ENCODE measurements at regions of chr15 and their contacts with region 1.

Region 1: GRCh38 chr15:42650208-42651066 is 75.0 kb downstream of the STARD9 start:
- DNase-seq: peak; percentile 87
- H3K4me3 ChIP-seq: no peak overlapping the region
- H3K27ac ChIP-seq: no peak overlapping the region
- H3K4me1 ChIP-seq: peaks cover 3% of the 10 kb centered on the region
- H3K27me3 ChIP-seq: no peaks in the 10 kb centered on the region
- CTCF ChIP-seq: peak; percentile 92

Region 2: GRCh38 chr15:42056934-42057779 is 593.3 kb before region 1 on chr15:
- CTCF ChIA-PET with region 1: no interaction called
- POLR2A ChIA-PET with region 1: no interaction called
- intact Hi-C with region 1: loop called (anchors 10 kb)
- DNase-seq: peak; percentile 86
- H3K4me3 ChIP-seq: peak overlapping the region; percentile 33
- H3K27ac ChIP-seq: no peak overlapping the region
- H3K4me1 ChIP-seq: no peaks in the 10 kb centered on the region
- H3K27me3 ChIP-seq: no peaks in the 10 kb centered on the region
- CTCF ChIP-seq: peak; percentile 89

Region 3: GRCh38 chr15:42495361-42496212 is 154.8 kb before region 1 on chr15 and contains the start of gene SNAP23:
- CTCF ChIA-PET with region 1: no interaction called
- POLR2A ChIA-PET with region 1: no interaction called
- intact Hi-C with region 1: loop called (anchors 10 kb)
- DNase-seq: peak; percentile 96
- H3K4me3 ChIP-seq: peak within 1 kb of the TSS; percentile 72
- H3K27ac ChIP-seq: peak within 1 kb of the TSS; percentile 89
- H3K4me1 ChIP-seq: peaks cover 14% of the 10 kb centered on the region
- H3K27me3 ChIP-seq: no peaks in the 10 kb centered on the region
- CTCF ChIP-seq: no peak
- total RNA-seq, gene SNAP23: 112 and 124 TPM in 2 replicates

Region 4: GRCh38 chr15:42548253-42549031 is 102.0 kb before region 1 on chr15 and contains the starts of genes HAUS2 and LRRC57:
- CTCF ChIA-PET with region 1: interaction called, 4 read pairs
- POLR2A ChIA-PET with region 1: no interaction called
- intact Hi-C with region 1: loop called (anchors 5 kb)
- DNase-seq: peak; percentile 90
- H3K4me3 ChIP-seq: peak within 1 kb of the TSS; percentile 95
- H3K27ac ChIP-seq: peak within 1 kb of the TSS; percentile 90
- H3K4me1 ChIP-seq: peaks cover 7% of the 10 kb centered on the region
- H3K27me3 ChIP-seq: no peaks in the 10 kb centered on the region
- CTCF ChIP-seq: no peak
- total RNA-seq, gene HAUS2: 39.5 and 44.1 TPM in 2 replicates
- total RNA-seq, gene LRRC57: 28.7 and 32.7 TPM in 2 replicates

Region 5: DNA sequence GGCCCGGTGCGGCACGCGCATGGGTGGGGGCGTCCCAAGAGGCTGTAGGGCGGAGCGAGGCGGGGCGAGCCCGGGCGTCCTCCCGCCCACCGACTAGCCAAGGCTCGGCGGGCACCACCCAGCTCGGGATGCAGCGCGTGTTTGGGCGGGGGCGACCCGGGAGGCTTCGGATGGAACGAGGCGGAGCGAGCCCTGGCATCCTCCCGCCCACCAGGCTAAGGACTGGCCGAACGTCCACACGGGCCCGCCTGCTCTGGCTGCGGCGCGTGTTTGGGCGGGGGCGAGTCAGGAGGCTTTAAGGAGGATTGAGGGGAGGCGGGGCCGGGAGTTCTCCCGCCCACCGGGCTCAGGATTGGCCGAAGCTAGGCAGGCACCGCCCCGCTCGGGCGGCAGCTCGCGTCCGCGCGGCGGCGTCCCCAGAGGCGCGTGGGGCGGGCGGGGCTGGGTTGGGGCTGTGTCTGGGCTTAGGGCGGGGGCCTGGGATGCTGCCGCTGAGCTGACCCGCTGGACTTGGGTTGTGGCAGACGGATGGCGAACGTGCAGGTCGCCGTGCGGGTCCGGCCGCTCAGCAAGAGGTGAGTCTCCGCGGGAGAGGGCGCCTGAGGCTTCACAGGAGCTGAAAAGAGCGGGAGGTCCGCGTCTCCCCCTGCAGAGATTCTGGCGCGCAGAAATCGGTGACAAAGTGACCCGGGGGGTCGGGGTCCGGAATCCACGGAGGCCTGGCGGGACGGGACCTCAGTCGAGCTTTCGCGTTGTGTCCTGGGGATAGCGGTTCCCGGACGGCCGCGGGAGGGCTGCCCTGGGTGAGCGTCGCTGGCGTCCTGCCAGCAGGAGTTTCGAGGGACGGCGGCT is 75.0 kb before region 1 on chr15 and contains the start of gene STARD9:
- CTCF ChIA-PET with region 1: no interaction called
- POLR2A ChIA-PET with region 1: interaction called, 17 read pairs
- intact Hi-C with region 1: loop called (anchors 5 kb)
- DNase-seq: peak; percentile 99
- H3K4me3 ChIP-seq: peak within 1 kb of the TSS; percentile 88
- H3K27ac ChIP-seq: peak within 1 kb of the TSS; percentile 82
- H3K4me1 ChIP-seq: peaks cover 9% of the 10 kb centered on the region
- H3K27me3 ChIP-seq: no peaks in the 10 kb centered on the region
- CTCF ChIP-seq: no peak
- total RNA-seq, gene STARD9: 12.0 and 16.4 TPM in 2 replicates

Region 6: GRCh38 chr15:42581272-42581730 is 69.1 kb before region 1 on chr15:
- CTCF ChIA-PET with region 1: no interaction called
- POLR2A ChIA-PET with region 1: no interaction called
- intact Hi-C with region 1: loop called (anchors 5 kb)
- DNase-seq: peak; percentile 91
- H3K4me3 ChIP-seq: peak overlapping the region; percentile 45
- H3K27ac ChIP-seq: peak overlapping the region; percentile 65
- H3K4me1 ChIP-seq: peaks cover 45% of the 10 kb centered on the region
- H3K27me3 ChIP-seq: no peaks in the 10 kb centered on the region
- CTCF ChIP-seq: no peak

Region 7: DNA sequence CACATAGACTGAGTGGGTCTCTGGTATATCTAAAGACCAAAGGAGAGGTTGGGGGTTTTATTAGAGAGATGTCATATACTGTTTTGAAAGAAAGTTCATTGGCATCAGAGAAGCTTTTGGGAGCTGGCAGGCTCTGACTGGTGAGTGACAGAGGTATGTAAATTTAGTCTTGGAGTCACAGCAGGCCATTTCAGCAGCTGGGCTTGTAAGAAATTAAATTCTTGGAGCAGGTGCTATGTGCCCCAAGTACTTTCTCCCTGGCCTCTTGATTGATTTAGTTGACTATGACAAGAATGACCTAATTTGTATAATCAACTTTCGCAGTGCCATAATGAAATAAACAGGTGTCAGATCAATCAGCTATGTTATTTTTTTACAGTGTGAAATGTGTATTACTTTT is 134.3 kb after region 1 on chr15:
- CTCF ChIA-PET with region 1: no interaction called
- POLR2A ChIA-PET with region 1: no interaction called
- intact Hi-C with region 1: no loop called
- DNase-seq: no peak
- H3K4me3 ChIP-seq: no peak overlapping the region
- H3K27ac ChIP-seq: no peak overlapping the region
- H3K4me1 ChIP-seq: no peaks in the 10 kb centered on the region
- H3K27me3 ChIP-seq: no peaks in the 10 kb centered on the region
- CTCF ChIP-seq: no peak